GM23248 (cell line): ENCODE measurements at regions of chr3 and their contacts with region 1.

Region 1: DNA sequence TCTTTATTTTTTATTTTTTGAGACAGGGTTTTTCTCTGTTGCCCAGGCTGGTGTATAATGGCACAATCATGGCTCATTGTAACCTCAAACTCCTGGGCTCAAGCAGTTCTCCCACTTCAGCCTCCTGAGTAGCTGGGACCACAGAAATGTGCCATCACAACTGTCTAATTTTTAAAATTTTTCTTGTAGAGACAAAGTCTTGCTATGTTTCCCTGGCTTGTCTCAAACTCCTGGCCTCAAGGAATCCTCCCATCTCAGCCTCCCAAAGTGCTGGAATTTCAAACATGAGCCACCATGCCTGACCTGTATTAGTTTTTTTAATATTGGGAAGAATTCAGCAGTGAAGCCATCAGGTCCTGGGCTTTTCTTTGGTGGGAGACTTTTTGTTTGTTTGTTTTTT is 13.6 kb upstream of the CLDN11 start:
- DNase-seq: no peak
- H3K4me3 ChIP-seq: no peak overlapping the region
- H3K27ac ChIP-seq: no peak overlapping the region
- H3K4me1 ChIP-seq: no peaks in the 10 kb centered on the region
- H3K27me3 ChIP-seq: no peaks in the 10 kb centered on the region

Region 2: GRCh38 chr3:169772897-169773828 is 631.9 kb before region 1 on chr3 and contains the start of gene MYNN:
- in situ Hi-C with region 1: no loop called
- DNase-seq: peak; percentile 96
- H3K4me3 ChIP-seq: peak within 1 kb of the TSS; percentile 98
- H3K27ac ChIP-seq: peak within 1 kb of the TSS; percentile 96
- H3K4me1 ChIP-seq: peaks cover 22% of the 10 kb centered on the region
- H3K27me3 ChIP-seq: no peaks in the 10 kb centered on the region
- total RNA-seq, gene MYNN: 18.4 and 19.6 TPM in 2 replicates

Region 3: DNA sequence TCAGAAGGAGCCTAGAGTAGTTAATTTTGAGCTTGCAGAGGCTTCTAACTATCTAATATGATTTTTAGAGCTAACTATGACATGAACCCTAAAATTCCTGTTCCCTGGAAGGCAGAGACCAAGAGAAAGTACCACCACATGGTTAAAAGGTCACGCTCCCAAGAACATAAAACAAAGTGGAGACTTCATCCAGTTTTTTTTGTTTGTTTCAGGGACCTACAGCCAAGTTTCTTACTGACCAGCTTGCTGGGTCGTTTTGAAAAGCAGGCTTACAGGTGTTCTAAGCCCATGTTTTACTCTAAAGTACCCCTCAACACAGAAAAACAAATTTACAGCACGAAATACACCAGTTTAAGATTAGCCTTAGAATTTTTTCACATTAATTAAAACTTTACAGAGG is 87.1 kb before region 1 on chr3:
- in situ Hi-C with region 1: loop called (anchors 10 kb)
- DNase-seq: no peak
- H3K4me3 ChIP-seq: no peak overlapping the region
- H3K27ac ChIP-seq: no peak overlapping the region
- H3K4me1 ChIP-seq: no peaks in the 10 kb centered on the region
- H3K27me3 ChIP-seq: no peaks in the 10 kb centered on the region

Region 4: DNA sequence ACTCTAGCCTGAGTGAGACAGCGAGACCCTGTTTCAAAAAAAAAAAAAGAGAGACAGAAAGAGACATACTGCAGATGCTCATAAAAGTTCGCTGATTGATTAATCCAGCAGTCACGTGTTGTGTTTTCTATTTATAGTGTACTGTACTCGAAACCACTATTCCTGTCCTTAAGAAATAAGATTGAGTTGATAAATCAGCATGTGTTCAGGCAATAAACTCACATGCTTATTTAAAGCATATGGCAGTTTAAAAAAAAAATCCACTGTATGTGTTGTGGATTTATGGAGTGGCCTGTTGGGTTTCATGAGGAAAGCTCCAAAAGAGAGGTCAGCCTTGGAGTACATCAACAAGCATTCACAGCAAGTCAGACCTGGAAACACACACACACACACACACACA is 447.2 kb after region 1 on chr3:
- in situ Hi-C with region 1: no loop called
- DNase-seq: no peak
- H3K4me3 ChIP-seq: no peak overlapping the region
- H3K27ac ChIP-seq: no peak overlapping the region
- H3K4me1 ChIP-seq: 0 out of 2 replicates have a peak, but pooled peaks cover 5% of the 10 kb centered on the region
- H3K27me3 ChIP-seq: no peaks in the 10 kb centered on the region